ENCODE measurements at regions of chr5 and their contacts with region 1.

Region 1: GRCh38 chr5:38979535-38979934 is 94.7 kb downstream of the RICTOR start:
- DNase-seq: no peak
- H3K4me3 Mint-ChIP-seq: no peak overlapping the region
- H3K27ac Mint-ChIP-seq: no peak overlapping the region
- H3K4me1 Mint-ChIP-seq: peaks cover 2% of the 10 kb centered on the region
- H3K27me3 Mint-ChIP-seq: no peaks in the 10 kb centered on the region
- CTCF ChIP-seq: no peak

Region 2: GRCh38 chr5:38968665-38969064 is 10.9 kb before region 1 on chr5:
- CTCF ChIA-PET with region 1: no interaction called
- intact Hi-C with region 1: loop called (anchors 1 kb)
- DNase-seq: no peak
- H3K4me3 Mint-ChIP-seq: no peak overlapping the region
- H3K27ac Mint-ChIP-seq: no peak overlapping the region
- H3K4me1 Mint-ChIP-seq: no peaks in the 10 kb centered on the region
- H3K27me3 Mint-ChIP-seq: no peaks in the 10 kb centered on the region
- CTCF ChIP-seq: no peak

Region 3: GRCh38 chr5:39164529-39165402 is 185.2 kb after region 1 on chr5:
- CTCF ChIA-PET with region 1: no interaction called
- intact Hi-C with region 1: no loop called
- DNase-seq: peak; percentile 12
- H3K4me3 Mint-ChIP-seq: no peak overlapping the region
- H3K27ac Mint-ChIP-seq: peak overlapping the region; percentile 66
- H3K4me1 Mint-ChIP-seq: peaks cover 36% of the 10 kb centered on the region
- H3K27me3 Mint-ChIP-seq: no peaks in the 10 kb centered on the region
- CTCF ChIP-seq: no peak